Natural killer cell (primary cell): ENCODE measurements at regions of chr11 and their contacts with region 1.

Region 1: GRCh38 chr11:25252854-25253253 is 756.0 kb downstream of the LUZP2 start:
- DNase-seq: no peak
- ATAC-seq: no peak
- H3K4me3 ChIP-seq: no peak overlapping the region
- H3K4me3 Mint-ChIP-seq: no peak overlapping the region
- H3K27ac ChIP-seq: no peak overlapping the region
- H3K27ac Mint-ChIP-seq: no peak overlapping the region
- H3K4me1 ChIP-seq: no peaks in the 10 kb centered on the region
- H3K4me1 Mint-ChIP-seq: no peaks in the 10 kb centered on the region
- H3K27me3 ChIP-seq: no peaks in the 10 kb centered on the region
- H3K27me3 Mint-ChIP-seq: no peaks in the 10 kb centered on the region
- CTCF ChIP-seq: no peak

Region 2: GRCh38 chr11:25293166-25293565 is 40.3 kb after region 1 on chr11:
- intact Hi-C with region 1: loop called (anchors 5 kb)
- DNase-seq: no peak
- ATAC-seq: no peak
- H3K4me3 ChIP-seq: no peak overlapping the region
- H3K4me3 Mint-ChIP-seq: no peak overlapping the region
- H3K27ac ChIP-seq: no peak overlapping the region
- H3K27ac Mint-ChIP-seq: no peak overlapping the region
- H3K4me1 ChIP-seq: no peaks in the 10 kb centered on the region
- H3K4me1 Mint-ChIP-seq: no peaks in the 10 kb centered on the region
- H3K27me3 ChIP-seq: no peaks in the 10 kb centered on the region
- H3K27me3 Mint-ChIP-seq: no peaks in the 10 kb centered on the region
- CTCF ChIP-seq: no peak